ENCODE measurements at regions of chr6 and their contacts with region 1.

Region 1: GRCh38 chr6:42166444-42167141 is 6.6 kb upstream of the GUCA1A start:
- DNase-seq: peak; percentile 65 to 87
- ATAC-seq: peak; percentile 82 to 98 (median 93)
- H3K4me3 ChIP-seq: no peak overlapping the region
- H3K4me3 Mint-ChIP-seq: no peak overlapping the region
- H3K27ac ChIP-seq: no peak overlapping the region
- H3K27ac Mint-ChIP-seq: no peak overlapping the region
- H3K4me1 ChIP-seq: no peaks in the 10 kb centered on the region
- H3K4me1 Mint-ChIP-seq: peaks cover 0 to 5% of the 10 kb centered on the region in 2 donors
- H3K27me3 ChIP-seq: no peaks in the 10 kb centered on the region
- H3K27me3 Mint-ChIP-seq: peaks cover 0 to 7% of the 10 kb centered on the region in 2 donors
- CTCF ChIP-seq: peak; percentile 87

Region 2: GRCh38 chr6:41602864-41603608 is 563.6 kb before region 1 on chr6:
- intact Hi-C with region 1: loop called (anchors 1 kb)
- DNase-seq: peak; percentile 65 to 89
- ATAC-seq: peak; percentile 75 to 98 (median 89)
- H3K4me3 ChIP-seq: no peak overlapping the region
- H3K4me3 Mint-ChIP-seq: no peak overlapping the region
- H3K27ac ChIP-seq: no peak overlapping the region
- H3K27ac Mint-ChIP-seq: no peak overlapping the region
- H3K4me1 ChIP-seq: peaks cover 7% of the 10 kb centered on the region
- H3K4me1 Mint-ChIP-seq: peaks cover 0 to 10% of the 10 kb centered on the region in 2 donors
- H3K27me3 ChIP-seq: no peaks in the 10 kb centered on the region
- H3K27me3 Mint-ChIP-seq: peaks cover 0 to 11% of the 10 kb centered on the region in 2 donors
- CTCF ChIP-seq: peak; percentile 83

Region 3: DNA sequence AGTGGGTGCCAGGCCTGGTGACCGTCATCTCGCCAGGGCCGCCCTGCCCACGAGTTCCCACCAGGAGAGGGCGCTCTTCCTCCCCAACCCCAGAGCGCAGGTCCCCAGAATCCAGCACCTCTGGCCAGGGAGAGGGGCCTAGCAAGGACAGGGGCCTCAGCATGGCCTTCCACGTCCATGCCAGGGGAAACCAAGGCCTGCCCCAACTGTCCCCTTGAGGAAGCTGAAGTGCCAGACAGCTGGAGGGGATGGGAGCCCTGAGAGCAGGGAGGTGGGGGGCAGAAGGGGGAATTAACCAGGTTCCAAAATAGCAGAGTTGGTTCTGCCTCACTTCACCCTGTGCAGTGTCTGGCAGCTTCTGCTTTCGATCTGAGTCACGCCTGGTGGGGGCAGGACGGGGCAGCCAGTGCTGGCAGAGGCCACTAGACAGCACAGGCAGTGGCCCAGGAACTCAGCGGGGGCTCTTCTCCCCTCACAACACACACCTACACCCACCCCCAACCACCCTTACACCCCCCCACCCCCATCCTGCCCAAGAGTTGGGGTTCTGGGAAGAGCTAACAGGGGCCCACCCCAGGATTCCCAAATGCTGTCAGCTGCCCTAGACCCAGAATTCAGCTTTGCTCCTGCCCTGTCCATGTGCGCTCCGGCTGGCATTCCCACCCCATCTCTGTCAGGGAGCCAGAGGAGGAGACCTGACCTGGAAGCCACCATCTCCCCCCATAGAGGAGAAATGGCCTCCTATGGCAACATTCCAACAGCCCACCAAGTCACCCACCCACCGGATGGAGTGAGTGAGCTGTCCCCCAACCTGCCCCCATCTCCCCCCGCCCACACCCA is 460.4 kb before region 1 on chr6:
- intact Hi-C with region 1: loop called (anchors 10 kb)
- DNase-seq: peak; percentile 74 to 79
- ATAC-seq: peak; percentile 91 to 96 (median 93)
- H3K4me3 ChIP-seq: no peak overlapping the region
- H3K4me3 Mint-ChIP-seq: peak overlapping the region; percentile 19
- H3K27ac ChIP-seq: peak overlapping the region; percentile 79
- H3K27ac Mint-ChIP-seq: peak overlapping the region; percentile 92 to 93
- H3K4me1 ChIP-seq: peaks cover 52% of the 10 kb centered on the region
- H3K4me1 Mint-ChIP-seq: peaks cover 50 to 78% of the 10 kb centered on the region in 2 donors
- H3K27me3 ChIP-seq: no peaks in the 10 kb centered on the region
- H3K27me3 Mint-ChIP-seq: no peaks in the 10 kb centered on the region
- CTCF ChIP-seq: peak; percentile 77

Region 4: GRCh38 chr6:41779793-41780545 is 386.6 kb before region 1 on chr6 and contains the start of gene FRS3:
- intact Hi-C with region 1: loop called (anchors 2 kb)
- DNase-seq: peak; percentile 99
- ATAC-seq: peak; percentile 96 to 100 (median 98)
- H3K4me3 ChIP-seq: peak within 1 kb of the TSS; percentile 40
- H3K4me3 Mint-ChIP-seq: peak within 1 kb of the TSS; percentile 92
- H3K27ac ChIP-seq: no peak within 1 kb of the TSS
- H3K27ac Mint-ChIP-seq: peak within 1 kb of the TSS in 1 of 2 donors; percentile 80
- H3K4me1 ChIP-seq: peaks cover 22% of the 10 kb centered on the region
- H3K4me1 Mint-ChIP-seq: peaks cover 7 to 22% of the 10 kb centered on the region in 2 donors
- H3K27me3 ChIP-seq: no peaks in the 10 kb centered on the region
- H3K27me3 Mint-ChIP-seq: peaks cover 0 to 3% of the 10 kb centered on the region in 2 donors
- CTCF ChIP-seq: peak; percentile 77
- total RNA-seq, gene FRS3: 4.5 to 5.7 (median 5.4) TPM

Region 5: DNA sequence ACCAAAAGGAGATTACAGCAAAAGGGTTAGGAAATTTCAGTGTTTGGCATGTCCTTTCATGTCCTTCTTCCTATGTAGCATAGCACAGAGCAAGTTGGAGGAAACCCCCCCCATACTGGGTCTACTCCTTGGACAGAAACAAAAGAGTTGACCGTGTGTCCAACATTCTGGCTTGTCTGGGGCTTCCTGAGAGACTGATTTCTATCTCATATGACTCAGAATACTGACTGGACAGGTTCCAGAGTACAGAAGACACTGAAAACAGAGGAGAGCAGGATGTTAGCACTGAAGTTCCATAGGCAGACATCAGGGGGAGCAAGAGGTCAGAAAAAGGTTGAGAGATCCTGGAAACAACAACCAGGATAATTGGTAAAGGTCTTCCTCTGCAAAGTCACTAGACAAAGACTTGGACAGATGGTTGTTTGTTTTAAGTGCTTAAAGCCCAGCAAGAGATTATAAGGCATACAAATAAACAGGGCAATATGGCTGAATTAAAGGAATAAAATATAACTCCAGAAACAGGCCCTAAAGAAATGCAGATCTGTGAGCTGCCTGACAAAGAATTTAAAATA is 319.8 kb before region 1 on chr6:
- intact Hi-C with region 1: loop called (anchors 1 kb)
- DNase-seq: peak; percentile 27 to 78
- ATAC-seq: peak; percentile 63 to 84 (median 74)
- H3K4me3 ChIP-seq: no peak overlapping the region
- H3K4me3 Mint-ChIP-seq: no peak overlapping the region
- H3K27ac ChIP-seq: no peak overlapping the region
- H3K27ac Mint-ChIP-seq: no peak overlapping the region
- H3K4me1 ChIP-seq: no peaks in the 10 kb centered on the region
- H3K4me1 Mint-ChIP-seq: peaks cover 6 to 12% of the 10 kb centered on the region in 2 donors
- H3K27me3 ChIP-seq: no peaks in the 10 kb centered on the region
- H3K27me3 Mint-ChIP-seq: no peaks in the 10 kb centered on the region
- CTCF ChIP-seq: peak; percentile 71

Region 6: DNA sequence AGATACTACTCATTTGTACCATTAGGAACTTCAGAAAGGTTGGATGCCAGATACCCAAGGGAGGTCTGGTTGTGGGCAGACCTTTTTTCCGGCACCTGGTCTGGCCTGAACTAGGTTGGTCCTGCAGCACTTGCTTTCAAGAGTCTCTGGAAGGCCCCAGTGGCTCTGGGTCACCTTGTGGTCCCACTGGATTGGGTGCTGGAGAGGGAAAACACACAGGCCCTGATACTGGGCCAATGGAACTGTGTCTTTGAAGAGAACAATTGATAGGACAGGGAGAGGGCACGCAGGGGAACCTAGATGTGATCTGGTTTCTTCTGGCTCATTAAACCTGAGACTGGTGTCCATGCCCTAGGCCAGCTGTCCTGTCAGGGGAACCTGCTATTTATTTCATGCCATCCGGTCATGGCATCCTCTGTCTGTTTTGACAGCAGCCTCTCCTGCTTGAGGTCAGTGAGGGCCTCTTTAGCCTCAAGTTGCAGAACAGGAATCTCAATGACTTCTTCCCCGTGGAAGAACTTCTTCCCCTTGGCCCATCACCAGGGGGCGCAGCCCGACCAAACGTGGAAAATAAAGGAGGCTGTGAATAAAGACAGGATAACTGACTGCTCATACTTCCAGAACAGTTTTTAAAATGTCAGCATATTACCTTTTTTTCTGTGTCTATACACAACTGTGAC is 91.3 kb before region 1 on chr6:
- intact Hi-C with region 1: loop called (anchors 5 kb)
- DNase-seq: peak; percentile 37 to 62
- ATAC-seq: no peak
- H3K4me3 ChIP-seq: no peak overlapping the region
- H3K4me3 Mint-ChIP-seq: no peak overlapping the region
- H3K27ac ChIP-seq: no peak overlapping the region
- H3K27ac Mint-ChIP-seq: no peak overlapping the region
- H3K4me1 ChIP-seq: no peaks in the 10 kb centered on the region
- H3K4me1 Mint-ChIP-seq: no peaks in the 10 kb centered on the region
- H3K27me3 ChIP-seq: no peaks in the 10 kb centered on the region
- H3K27me3 Mint-ChIP-seq: no peaks in the 10 kb centered on the region
- CTCF ChIP-seq: peak; percentile 43

Measured in natural killer cell (primary cell).